ENCODE measurements at regions of chr9 and their contacts with region 1.

Region 1: DNA sequence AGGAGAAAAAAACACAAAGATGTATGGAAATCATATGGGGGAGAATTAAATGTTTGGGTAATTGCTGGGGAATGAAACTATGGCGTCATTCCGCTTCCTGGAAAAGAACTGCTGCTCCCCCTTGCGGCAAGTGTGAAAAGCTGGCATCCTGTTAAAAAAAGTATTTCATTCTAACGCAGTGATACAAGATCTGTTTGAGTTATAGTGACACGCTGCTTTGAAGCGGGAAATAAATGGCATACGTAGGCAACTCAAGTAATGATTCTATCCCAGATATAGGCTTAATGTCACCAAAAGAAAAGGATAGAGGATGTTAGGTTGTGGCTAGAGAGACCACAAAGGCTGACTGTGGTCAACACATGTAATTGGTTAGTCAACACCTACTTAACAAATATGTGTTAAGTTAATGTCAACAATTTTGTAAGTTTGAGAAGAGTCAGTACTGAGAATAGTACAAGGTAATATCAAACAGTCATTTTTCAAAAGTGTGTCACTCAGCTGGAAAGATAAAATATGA is 70.2 kb upstream of the ALDH1A1 start:
- DNase-seq: peak; percentile 49
- ATAC-seq: peak; percentile 68
- H3K4me3 Mint-ChIP-seq: no peak overlapping the region
- H3K27ac Mint-ChIP-seq: no peak overlapping the region
- H3K4me1 Mint-ChIP-seq: peaks cover 8% of the 10 kb centered on the region
- H3K27me3 Mint-ChIP-seq: peaks cover 14% of the 10 kb centered on the region
- CTCF ChIP-seq: peak; percentile 83

Region 2: DNA sequence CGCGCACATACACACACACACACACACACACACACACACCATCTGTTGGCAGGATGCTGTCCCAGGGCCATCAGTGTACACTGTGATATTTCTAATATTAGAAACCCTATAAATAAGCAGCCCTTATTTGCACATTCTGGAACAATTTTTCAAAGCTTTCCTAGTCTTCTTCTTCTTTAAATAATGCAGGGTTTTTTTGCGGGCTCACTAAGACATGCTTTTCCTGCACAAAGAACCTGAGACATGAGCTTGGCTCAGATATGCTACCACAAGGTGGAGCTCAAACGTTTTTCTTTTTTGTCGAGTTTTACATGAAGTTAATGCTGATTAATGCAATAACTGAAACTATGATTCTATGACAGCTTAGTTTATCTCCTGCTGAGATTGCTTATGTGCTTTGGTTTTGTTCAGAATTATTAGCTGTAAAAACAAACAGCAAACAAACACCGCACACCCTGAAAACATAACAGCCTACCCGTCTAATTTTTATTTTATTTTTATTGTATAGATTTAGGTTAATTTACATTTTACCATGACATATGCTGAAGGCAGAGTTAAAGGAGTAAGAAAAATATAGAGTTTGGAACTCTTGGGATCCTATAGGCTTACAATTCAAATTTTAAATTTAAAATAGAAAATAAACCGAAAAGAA is 166.0 kb before region 1 on chr9:
- CTCF ChIA-PET with region 1: interaction called, 16 read pairs
- POLR2A ChIA-PET with region 1: no interaction called
- intact Hi-C with region 1: no loop called
- DNase-seq: peak; percentile 12
- ATAC-seq: no peak
- H3K4me3 Mint-ChIP-seq: no peak overlapping the region
- H3K27ac Mint-ChIP-seq: no peak overlapping the region
- H3K4me1 Mint-ChIP-seq: no peaks in the 10 kb centered on the region
- H3K27me3 Mint-ChIP-seq: no peaks in the 10 kb centered on the region
- CTCF ChIP-seq: peak; percentile 47

Region 3: GRCh38 chr9:72871685-72872084 is 151.4 kb before region 1 on chr9:
- CTCF ChIA-PET with region 1: interaction called, 12 read pairs
- POLR2A ChIA-PET with region 1: no interaction called
- intact Hi-C with region 1: loop called (anchors 10 kb)
- DNase-seq: no peak
- ATAC-seq: no peak
- H3K4me3 Mint-ChIP-seq: no peak overlapping the region
- H3K27ac Mint-ChIP-seq: no peak overlapping the region
- H3K4me1 Mint-ChIP-seq: no peaks in the 10 kb centered on the region
- H3K27me3 Mint-ChIP-seq: peaks cover 3% of the 10 kb centered on the region
- CTCF ChIP-seq: no peak

Region 4: DNA sequence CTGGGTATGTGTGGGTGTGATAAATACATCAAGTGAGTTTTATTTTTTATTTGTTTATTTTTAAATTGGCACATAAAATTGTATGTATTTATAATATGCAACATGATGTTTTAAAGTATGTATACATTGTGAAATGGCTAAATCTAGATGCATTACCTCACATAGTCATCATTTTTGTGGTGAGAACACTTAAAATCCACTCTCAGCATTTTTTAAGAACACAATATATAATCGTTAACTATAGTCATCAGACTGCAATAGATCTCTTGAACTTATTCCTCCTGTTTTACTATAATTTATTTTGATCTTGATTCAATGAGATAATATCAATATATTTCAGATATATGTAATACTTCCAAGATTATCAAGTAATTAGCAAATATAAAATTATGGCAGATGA is 23.7 kb after region 1 on chr9:
- CTCF ChIA-PET with region 1: no interaction called
- POLR2A ChIA-PET with region 1: no interaction called
- intact Hi-C with region 1: no loop called
- DNase-seq: no peak
- ATAC-seq: no peak
- H3K4me3 Mint-ChIP-seq: no peak overlapping the region
- H3K27ac Mint-ChIP-seq: no peak overlapping the region
- H3K4me1 Mint-ChIP-seq: no peaks in the 10 kb centered on the region
- H3K27me3 Mint-ChIP-seq: peaks cover 5% of the 10 kb centered on the region
- CTCF ChIP-seq: no peak

Measured in activated CD8-positive, alpha-beta T cell treated with anti-CD3 and anti-CD28 coated beads for 36 hours (primary cell).